ENCODE measurements at regions of chr19 and their contacts with region 1.

Region 1: DNA sequence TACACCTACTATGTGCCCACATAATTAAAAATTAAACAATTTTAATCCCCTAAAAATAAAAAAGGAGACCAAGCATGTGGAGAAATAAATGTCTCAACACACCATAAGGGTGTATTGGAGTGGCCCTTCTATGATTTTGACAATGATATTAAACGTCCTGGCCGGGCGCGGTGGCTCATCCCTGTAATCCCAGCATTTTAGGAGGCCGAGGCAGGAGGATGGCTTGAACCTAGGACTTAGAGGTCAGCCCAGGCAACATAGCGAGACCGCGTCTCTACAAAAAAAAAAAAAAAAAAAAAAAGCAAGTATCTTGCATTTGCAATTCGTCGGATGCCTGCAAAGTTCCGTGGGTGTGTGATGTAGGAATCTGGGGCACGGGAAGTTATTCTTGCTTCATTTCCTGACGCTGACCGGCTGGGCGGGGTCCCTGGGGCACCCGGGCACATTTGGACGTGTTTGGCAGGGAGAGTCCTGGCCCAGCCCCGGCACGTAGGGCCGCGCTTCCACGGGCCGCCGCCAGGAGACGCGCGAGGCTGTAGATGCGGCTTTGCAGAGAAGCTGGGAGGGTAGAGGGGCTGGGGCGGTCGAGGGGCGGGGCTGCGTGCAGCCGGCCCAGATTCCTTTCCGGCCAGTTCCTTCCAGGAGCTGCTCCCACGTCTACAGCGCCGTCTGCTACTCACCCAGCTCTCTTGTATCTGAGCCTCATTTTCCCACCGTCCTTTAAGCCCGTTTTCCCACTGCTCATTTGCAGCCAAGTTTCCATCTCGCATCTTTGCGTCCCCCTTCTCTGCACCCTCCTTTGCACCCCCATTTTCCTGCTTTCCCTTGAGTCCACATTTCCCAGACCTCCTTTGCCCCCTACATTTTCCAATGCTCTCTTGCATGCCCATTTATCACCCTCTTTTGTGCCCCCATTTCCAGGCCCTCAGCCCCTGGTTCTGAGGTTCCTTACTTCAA is 2.2 kb upstream of the TSPAN16 start:
- DNase-seq: peak; percentile 95 to 97
- ATAC-seq: peak; percentile 95 to 98 (median 98)
- H3K4me3 ChIP-seq: peak overlapping the region in 7 of 10 donors; percentile 9 to 40 (median 26)
- H3K27ac ChIP-seq: peak overlapping the region in 8 of 10 donors; percentile 29 to 70 (median 62)
- H3K4me1 ChIP-seq: peaks cover 0 to 38% (median 10%) of the 10 kb centered on the region in 9 donors
- H3K27me3 ChIP-seq: no peaks in the 10 kb centered on the region
- CTCF ChIP-seq: peak; percentile 94 to 100 (median 98)

Region 2: GRCh38 chr19:11242864-11243797 is 50.6 kb before region 1 on chr19:
- intact Hi-C with region 1: loop called in 5 of 10 experiments (anchors 2 to 5 kb)
- DNase-seq: peak; percentile 96 to 97
- ATAC-seq: peak; percentile 85 to 91 (median 90)
- H3K4me3 ChIP-seq: no peak overlapping the region
- H3K27ac ChIP-seq: peak overlapping the region in 9 of 10 donors; percentile 51 to 94 (median 78)
- H3K4me1 ChIP-seq: peaks cover 15 to 50% (median 29%) of the 10 kb centered on the region in 9 donors
- H3K27me3 ChIP-seq: no peaks in the 10 kb centered on the region
- CTCF ChIP-seq: peak; percentile 77 to 93 (median 92)

Region 3: DNA sequence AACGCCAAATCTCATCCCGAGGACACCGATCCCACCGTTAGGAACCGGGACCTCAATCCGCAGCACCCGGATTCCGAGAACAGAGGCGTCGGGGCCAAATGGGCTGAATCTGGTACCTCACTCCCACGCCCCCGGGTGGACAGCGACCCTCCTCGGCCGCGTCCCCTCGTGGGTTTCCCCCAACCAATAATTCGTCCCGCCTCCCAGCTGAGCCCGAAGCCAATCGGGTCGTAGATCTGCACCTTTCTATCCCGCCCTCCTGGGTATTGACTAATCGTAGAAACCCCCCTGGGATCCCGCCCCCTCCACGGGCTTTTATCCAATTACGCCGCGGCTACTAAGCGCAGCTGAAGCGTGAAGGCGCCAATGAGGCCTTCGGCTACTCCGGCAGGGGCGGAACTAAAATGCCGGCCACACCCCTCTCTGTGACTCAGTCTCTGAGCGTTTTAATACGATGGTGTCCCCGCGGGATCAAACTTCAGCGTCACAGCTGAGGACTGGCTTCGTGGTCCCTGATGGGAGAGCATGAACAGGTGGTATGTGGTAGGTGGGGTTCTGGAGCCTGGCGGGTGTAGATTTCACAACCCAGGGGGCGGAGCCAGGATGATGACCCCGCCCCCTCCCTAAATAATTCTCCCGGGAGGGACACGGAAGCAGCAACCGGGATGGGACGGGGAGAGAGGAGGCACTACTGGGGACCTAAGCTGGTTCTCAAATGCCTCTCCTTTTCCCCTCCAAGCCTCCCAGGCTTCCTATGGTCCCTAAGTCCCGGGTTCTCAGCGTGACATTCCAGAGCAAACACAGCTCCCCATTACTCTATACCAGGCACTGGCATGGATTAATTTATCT is 52.6 kb after region 1 on chr19 and contains the starts of genes CCDC159 and TMEM205:
- intact Hi-C with region 1: loop called in 3 of 10 experiments (anchors 5 to 10 kb)
- DNase-seq: peak; percentile 97 to 99
- ATAC-seq: peak; percentile 94 to 97 (median 97)
- H3K4me3 ChIP-seq: peak within 1 kb of the TSS; percentile 44 to 92 (median 68)
- H3K27ac ChIP-seq: peak within 1 kb of the TSS; percentile 27 to 90 (median 82)
- H3K4me1 ChIP-seq: peaks cover 6 to 32% (median 25%) of the 10 kb centered on the region in 9 donors
- H3K27me3 ChIP-seq: no peaks in the 10 kb centered on the region
- CTCF ChIP-seq: peak in 4 of 9 donors; percentile 11 to 38 (median 36)
- total RNA-seq, gene CCDC159: 13.4 to 25.5 (median 19.7) TPM
- total RNA-seq, gene TMEM205: 65.1 to 114 (median 83.8) TPM

Region 4: DNA sequence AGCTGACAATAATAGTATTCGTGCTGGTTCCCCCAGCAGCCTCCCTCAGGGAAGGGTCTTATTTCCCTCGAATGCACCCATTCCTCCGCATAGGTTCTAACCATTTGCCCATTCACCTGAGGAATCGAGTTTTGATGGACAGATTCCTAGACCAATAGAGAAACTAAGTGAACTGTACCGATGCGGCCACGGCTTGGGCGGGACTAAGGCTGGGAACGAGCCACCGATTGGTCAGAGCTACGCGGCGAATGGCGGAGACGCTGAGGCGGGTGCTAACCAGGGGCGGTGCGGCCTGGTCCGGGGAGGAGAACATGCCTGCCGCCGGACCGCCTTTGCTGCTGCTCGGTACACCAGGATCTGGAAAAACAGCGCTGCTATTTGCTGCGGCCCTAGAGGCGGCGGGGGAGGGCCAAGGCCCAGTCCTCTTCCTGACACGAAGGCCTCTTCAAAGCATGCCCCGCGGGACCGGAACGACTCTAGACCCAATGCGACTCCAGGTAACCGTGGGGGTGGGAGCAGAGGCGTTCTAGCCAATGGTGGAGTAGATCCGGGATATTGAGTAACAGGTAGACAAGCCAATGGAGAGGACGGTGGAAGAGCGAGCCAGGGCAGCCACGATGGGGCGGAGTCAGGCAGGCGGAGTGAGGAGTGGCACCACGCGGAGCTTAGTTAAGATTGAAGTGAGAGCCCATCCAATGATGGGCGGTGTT is 80.9 kb after region 1 on chr19 and contains the start of gene SWSAP1:
- intact Hi-C with region 1: loop called in 1 of 10 experiments (anchors 10 kb)
- DNase-seq: peak; percentile 98 to 99
- ATAC-seq: peak; percentile 96 to 97 (median 97)
- H3K4me3 ChIP-seq: peak within 1 kb of the TSS; percentile 7 to 80 (median 67)
- H3K27ac ChIP-seq: peak within 1 kb of the TSS; percentile 87 to 97 (median 95)
- H3K4me1 ChIP-seq: peaks cover 3 to 44% (median 30%) of the 10 kb centered on the region in 9 donors
- H3K27me3 ChIP-seq: no peaks in the 10 kb centered on the region
- CTCF ChIP-seq: no peak
- total RNA-seq, gene SWSAP1: 0.53 to 2.1 (median 1.6) TPM

Region 5: DNA sequence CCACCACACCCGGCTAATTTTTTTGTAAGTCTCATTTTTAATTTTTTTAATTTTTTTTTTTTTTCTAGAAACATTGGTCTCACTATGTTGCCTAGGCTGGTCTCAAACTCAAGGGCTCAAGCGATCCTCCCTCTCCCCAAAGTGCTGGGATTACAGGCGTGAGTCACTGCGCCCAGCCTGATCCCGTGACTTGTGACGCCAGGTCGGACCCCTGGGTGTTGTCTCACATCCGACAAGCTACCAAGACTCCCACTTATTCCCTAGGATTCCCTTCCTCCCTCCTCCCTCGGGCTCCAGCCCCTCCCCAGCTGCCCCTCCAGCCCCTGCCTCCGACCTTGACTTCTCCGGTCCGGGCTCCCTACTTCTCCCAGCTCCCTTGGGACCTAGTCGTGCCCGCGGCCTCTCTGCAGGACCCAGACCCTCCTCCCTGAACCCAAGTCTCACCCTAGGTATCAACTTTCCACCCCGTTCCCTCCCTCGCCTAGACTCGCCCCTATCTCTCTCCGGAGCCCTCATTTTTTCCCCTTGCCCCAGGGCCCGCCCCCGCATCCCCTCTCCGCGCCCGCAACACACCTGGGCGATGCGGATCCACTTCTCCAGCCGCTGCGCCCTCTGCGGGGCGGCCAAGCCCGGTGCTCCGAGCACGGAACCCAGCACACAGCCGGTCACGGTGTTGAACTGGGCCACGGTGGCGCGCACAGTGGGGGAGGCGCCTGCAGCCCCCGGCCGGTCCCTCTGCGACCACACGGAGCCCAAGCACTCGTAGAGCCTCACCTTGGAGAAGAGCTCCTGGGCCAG is 112.3 kb after region 1 on chr19:
- intact Hi-C with region 1: loop called in 2 of 10 experiments (anchors 10 kb)
- DNase-seq: peak in 1 of 2 donors; percentile 45
- ATAC-seq: peak in 7 of 8 donors; percentile 36 to 81 (median 59)
- H3K4me3 ChIP-seq: no peak overlapping the region
- H3K27ac ChIP-seq: no peak overlapping the region
- H3K4me1 ChIP-seq: peaks cover 0 to 20% (median 7%) of the 10 kb centered on the region in 9 donors
- H3K27me3 ChIP-seq: peaks cover 0 to 28% (median 13%) of the 10 kb centered on the region in 7 donors
- CTCF ChIP-seq: peak in 7 of 9 donors; percentile 38 to 55 (median 45)

Region 6: GRCh38 chr19:11446652-11447301 is 153.1 kb after region 1 on chr19:
- intact Hi-C with region 1: loop called in 8 of 10 experiments (anchors 1 to 10 kb)
- DNase-seq: peak; percentile 39 to 74
- ATAC-seq: peak; percentile 72 to 80 (median 76)
- H3K4me3 ChIP-seq: no peak overlapping the region
- H3K27ac ChIP-seq: no peak overlapping the region
- H3K4me1 ChIP-seq: peaks cover 0 to 20% (median 0%) of the 10 kb centered on the region in 9 donors
- H3K27me3 ChIP-seq: no peaks in the 10 kb centered on the region
- CTCF ChIP-seq: peak; percentile 59 to 81 (median 74)

Region 7: DNA sequence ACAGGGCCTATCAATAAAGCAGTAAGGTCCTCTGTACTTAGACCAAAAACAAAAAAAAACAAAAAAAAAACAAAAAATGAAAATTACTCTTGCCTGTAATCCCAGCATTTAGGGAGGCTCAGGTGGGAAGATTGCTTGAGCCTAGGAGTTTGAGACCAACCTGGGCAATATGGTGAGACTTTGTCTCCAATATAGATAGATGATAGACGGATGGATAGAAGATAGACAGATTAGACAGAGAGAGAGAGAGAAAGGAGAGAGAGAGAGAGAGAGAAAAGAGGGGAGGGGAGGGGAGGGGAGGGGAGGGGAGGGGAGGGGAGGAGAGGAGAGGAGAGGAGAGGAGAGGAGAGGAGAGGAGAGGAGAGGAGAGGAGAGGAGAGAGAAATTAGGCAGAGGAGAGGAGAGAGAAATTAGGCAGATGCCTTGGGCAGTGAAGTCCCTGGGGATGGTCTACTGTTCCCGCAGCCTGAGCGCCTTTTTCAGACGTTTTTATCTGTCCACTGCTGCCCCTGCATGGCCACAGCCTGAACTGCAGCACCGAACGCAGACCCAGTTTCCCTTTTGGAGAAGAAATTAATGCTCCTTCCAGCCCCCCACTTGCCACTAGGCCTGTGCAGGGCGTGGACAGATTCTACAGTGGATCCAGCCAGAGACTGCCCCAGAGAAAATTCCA is 293.7 kb after region 1 on chr19:
- intact Hi-C with region 1: loop called in 9 of 10 experiments (anchors 2 to 10 kb)
- DNase-seq: peak; percentile 74 to 81
- ATAC-seq: peak; percentile 78 to 91 (median 86)
- H3K4me3 ChIP-seq: no peak overlapping the region
- H3K27ac ChIP-seq: no peak overlapping the region
- H3K4me1 ChIP-seq: peaks cover 0 to 18% (median 0%) of the 10 kb centered on the region in 9 donors
- H3K27me3 ChIP-seq: no peaks in the 10 kb centered on the region
- CTCF ChIP-seq: peak; percentile 75 to 91 (median 83)